Activated naive CD4-positive, alpha-beta T cell treated with anti-CD3 and anti-CD28 coated beads, Interleukin-2, amount 10 ng/mL, durations not matched to agents 7 days and 5 days (primary cell): ENCODE measurements at regions of chr11 and their contacts with region 1.

Region 1: DNA sequence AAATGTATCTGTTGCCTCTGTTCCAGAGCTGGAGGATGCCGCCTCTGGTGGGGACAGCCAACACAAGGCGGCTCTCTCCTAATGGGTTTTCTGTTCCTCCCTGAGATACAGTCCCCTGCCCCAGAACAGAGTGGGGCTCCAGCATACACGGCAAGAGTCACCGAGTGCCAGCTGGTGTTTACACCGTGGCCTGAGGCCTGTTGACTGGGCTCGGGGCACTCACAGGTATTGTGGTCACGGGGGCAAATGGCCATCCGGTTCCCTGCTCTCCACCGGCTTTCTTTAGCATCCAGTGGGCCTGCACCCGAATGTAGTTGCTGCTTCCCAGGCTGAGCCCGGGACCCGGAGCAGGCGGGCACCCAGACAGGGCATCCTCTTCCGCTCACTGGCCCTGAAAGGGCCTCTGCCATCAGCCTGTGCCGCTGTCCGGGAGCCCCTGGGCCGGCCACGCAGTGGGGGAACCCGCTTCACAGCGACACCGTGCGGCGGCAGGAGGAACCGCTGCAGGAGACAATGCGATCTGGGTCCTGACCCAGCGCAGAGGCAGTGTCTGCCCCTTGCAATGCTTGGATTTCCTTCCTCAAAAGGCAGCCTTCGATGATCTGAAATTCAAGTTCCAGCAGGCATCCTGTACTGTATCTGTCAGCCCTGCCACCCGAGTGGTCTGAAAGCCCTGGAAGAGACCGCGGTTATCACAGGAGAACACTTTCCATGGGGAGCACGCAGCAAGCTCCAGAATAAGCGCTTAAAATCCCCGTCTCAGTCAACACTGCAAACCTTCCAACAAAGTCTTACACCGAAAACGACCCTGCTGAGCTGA is 859 bp upstream of the KRTAP5-5 start:
- DNase-seq: peak; percentile 69
- H3K4me3 Mint-ChIP-seq: no peak overlapping the region
- H3K27ac Mint-ChIP-seq: no peak overlapping the region
- H3K4me1 Mint-ChIP-seq: no peaks in the 10 kb centered on the region
- H3K27me3 Mint-ChIP-seq: peaks cover 69% of the 10 kb centered on the region

Region 2: GRCh38 chr11:1640076-1640946 is 11.6 kb after region 1 on chr11:
- CTCF ChIA-PET with region 1: interaction called, 11 read pairs
- DNase-seq: peak; percentile 39
- H3K4me3 Mint-ChIP-seq: no peak overlapping the region
- H3K27ac Mint-ChIP-seq: no peak overlapping the region
- H3K4me1 Mint-ChIP-seq: peaks cover 2% of the 10 kb centered on the region
- H3K27me3 Mint-ChIP-seq: peaks cover 23% of the 10 kb centered on the region